GM12878 (cell line): ENCODE measurements at regions of chr2 and their contacts with region 1.

Region 1: DNA sequence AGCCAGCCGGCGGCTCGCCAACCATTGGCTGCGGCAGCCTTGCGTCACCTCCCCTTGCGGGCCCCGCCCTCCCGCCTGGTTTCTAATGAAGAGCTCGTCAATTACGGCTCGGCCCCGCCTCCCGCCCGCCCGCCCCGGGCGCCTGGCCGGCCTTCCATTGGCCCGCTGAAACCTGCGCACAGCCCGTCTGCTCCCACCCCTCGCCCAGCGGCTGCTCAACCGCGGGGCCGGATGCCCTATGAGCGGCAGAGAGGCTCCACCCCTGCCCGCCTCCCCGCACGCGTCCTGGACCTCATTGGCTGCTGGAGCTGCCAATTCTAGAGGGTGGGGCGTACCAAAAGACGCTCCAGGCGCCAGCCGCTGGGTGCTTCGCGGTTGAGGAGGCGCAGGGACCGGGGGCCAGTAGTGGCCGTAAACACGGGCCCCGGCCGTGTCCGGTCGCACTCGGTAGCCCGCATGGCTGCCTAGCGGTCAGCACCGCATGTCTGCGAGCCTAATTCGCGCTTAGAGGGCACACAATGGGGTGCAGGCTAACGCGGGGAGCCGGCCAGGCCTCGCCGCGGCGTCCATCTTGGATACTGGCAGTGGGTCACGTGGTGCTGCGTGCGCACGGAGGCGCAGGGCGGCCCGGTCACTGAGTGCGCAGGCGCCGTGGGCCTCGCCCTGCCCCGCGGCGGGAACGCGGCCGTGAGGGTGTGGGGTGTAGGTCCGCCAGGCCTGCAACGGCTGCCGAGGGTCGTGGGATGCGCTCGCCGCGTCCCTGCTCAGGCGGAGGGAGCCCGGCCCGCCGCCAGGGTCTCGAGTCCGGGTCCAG is 454 bp upstream of the HDAC4 start:
- DNase-seq: peak; percentile 93
- ATAC-seq: peak; percentile 97
- H3K4me3 ChIP-seq: peak overlapping the region; percentile 79
- H3K27ac ChIP-seq: peak overlapping the region; percentile 96
- H3K4me1 ChIP-seq: peaks cover 5% of the 10 kb centered on the region; the same call in 1 of the 2 replicates
- H3K27me3 ChIP-seq: no peaks in the 10 kb centered on the region
- CTCF ChIP-seq: no peak
- EP300 ChIP-seq: 0 out of 4 replicates have a peak, but pooled peaks of 1 of the 2 experiments have one; percentile 32
- POLR2A ChIP-seq: peak; percentile 100
- RAD21 ChIP-seq: no peak

Region 2: GRCh38 chr2:239035361-239036078 is 365.8 kb before region 1 on chr2:
- CTCF ChIA-PET with region 1: no interaction called
- POLR2A ChIA-PET with region 1: no interaction called
- RAD21 ChIA-PET with region 1: no interaction called
- SMC1A ChIA-PET with region 1: no interaction called
- in situ Hi-C with region 1: no loop called
- intact Hi-C with region 1: loop called (anchors 5 kb)
- DNase-seq: no peak
- ATAC-seq: peak; percentile 98
- H3K4me3 ChIP-seq: no peak overlapping the region
- H3K27ac ChIP-seq: no peak overlapping the region
- H3K4me1 ChIP-seq: no peaks in the 10 kb centered on the region
- H3K27me3 ChIP-seq: no peaks in the 10 kb centered on the region; a peak in 1 of 4 replicates
- CTCF ChIP-seq: peak; percentile 58 to 91 (median 76)
- EP300 ChIP-seq: no peak
- POLR2A ChIP-seq: no peak
- RAD21 ChIP-seq: peak; percentile 77

Region 3: GRCh38 chr2:239143858-239144718 is 257.2 kb before region 1 on chr2:
- CTCF ChIA-PET with region 1: interaction called, 3 read pairs
- POLR2A ChIA-PET with region 1: no interaction called
- RAD21 ChIA-PET with region 1: interaction called, 3 read pairs
- SMC1A ChIA-PET with region 1: no interaction called
- in situ Hi-C with region 1: no loop called
- intact Hi-C with region 1: loop called (anchors 5 kb)
- DNase-seq: no peak
- ATAC-seq: peak; percentile 68
- H3K4me3 ChIP-seq: no peak overlapping the region
- H3K27ac ChIP-seq: no peak overlapping the region
- H3K4me1 ChIP-seq: peaks cover 10% of the 10 kb centered on the region
- H3K27me3 ChIP-seq: no peaks in the 10 kb centered on the region
- CTCF ChIP-seq: peak; percentile 45 to 77 (median 64); a peak in 5 of 6 replicates
- EP300 ChIP-seq: no peak
- POLR2A ChIP-seq: no peak
- RAD21 ChIP-seq: peak; percentile 44; the same call in 1 of the 2 replicates

Region 4: DNA sequence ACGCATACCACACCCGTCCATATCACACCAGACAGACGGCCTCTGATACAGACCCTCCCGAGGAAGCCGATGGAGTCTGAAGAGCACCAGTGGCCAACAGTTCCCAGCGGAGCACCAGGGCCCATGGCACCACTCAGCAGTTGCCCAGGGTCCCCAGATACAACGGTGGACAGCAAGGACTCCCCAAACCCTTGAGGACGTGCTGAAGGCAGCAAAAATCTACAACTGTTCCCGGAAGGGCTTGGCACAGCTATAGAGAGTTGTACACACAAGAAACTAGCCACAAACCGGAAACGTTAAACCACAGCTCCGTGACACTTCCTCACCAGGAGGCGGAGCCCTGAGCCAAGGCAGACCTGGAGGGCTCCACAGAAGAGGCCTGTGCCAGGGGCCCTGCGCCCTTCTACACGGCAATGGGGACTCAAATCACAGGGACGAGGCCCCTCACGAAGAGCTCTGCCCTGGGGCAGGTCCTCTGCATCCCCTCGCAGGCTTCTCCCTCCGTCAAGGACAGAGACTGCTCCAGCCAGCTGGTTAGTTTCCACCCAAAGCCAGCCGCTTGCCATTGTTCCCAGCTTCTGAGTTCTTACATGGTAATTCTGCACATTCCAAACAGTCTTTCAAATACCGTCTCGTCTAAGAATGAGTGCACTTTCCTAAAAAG is 133.9 kb before region 1 on chr2:
- CTCF ChIA-PET with region 1: interaction called, 7 read pairs
- POLR2A ChIA-PET with region 1: no interaction called
- RAD21 ChIA-PET with region 1: interaction called, 6 read pairs
- SMC1A ChIA-PET with region 1: interaction called, 16 read pairs
- in situ Hi-C with region 1: no loop called
- intact Hi-C with region 1: loop called (anchors 5 kb)
- DNase-seq: peak; percentile 65
- ATAC-seq: peak; percentile 95
- H3K4me3 ChIP-seq: peak overlapping the region; percentile 45; the same call in 1 of the 2 replicates
- H3K27ac ChIP-seq: no peak overlapping the region
- H3K4me1 ChIP-seq: peaks cover 44% of the 10 kb centered on the region
- H3K27me3 ChIP-seq: no peaks in the 10 kb centered on the region
- CTCF ChIP-seq: peak; percentile 42 to 71 (median 57); a peak in 5 of 6 replicates
- EP300 ChIP-seq: no peak
- POLR2A ChIP-seq: peak; percentile 59; the same call in 1 of the 2 replicates
- RAD21 ChIP-seq: peak; percentile 81

Region 5: GRCh38 chr2:239348563-239349447 is 52.5 kb before region 1 on chr2:
- CTCF ChIA-PET with region 1: no interaction called
- POLR2A ChIA-PET with region 1: no interaction called
- RAD21 ChIA-PET with region 1: no interaction called
- SMC1A ChIA-PET with region 1: no interaction called
- in situ Hi-C with region 1: no loop called
- intact Hi-C with region 1: no loop called
- DNase-seq: no peak
- ATAC-seq: no peak
- H3K4me3 ChIP-seq: no peak overlapping the region
- H3K27ac ChIP-seq: no peak overlapping the region
- H3K4me1 ChIP-seq: no peaks in the 10 kb centered on the region
- H3K27me3 ChIP-seq: no peaks in the 10 kb centered on the region
- CTCF ChIP-seq: no peak
- EP300 ChIP-seq: no peak
- POLR2A ChIP-seq: no peak
- RAD21 ChIP-seq: no peak

Region 6: DNA sequence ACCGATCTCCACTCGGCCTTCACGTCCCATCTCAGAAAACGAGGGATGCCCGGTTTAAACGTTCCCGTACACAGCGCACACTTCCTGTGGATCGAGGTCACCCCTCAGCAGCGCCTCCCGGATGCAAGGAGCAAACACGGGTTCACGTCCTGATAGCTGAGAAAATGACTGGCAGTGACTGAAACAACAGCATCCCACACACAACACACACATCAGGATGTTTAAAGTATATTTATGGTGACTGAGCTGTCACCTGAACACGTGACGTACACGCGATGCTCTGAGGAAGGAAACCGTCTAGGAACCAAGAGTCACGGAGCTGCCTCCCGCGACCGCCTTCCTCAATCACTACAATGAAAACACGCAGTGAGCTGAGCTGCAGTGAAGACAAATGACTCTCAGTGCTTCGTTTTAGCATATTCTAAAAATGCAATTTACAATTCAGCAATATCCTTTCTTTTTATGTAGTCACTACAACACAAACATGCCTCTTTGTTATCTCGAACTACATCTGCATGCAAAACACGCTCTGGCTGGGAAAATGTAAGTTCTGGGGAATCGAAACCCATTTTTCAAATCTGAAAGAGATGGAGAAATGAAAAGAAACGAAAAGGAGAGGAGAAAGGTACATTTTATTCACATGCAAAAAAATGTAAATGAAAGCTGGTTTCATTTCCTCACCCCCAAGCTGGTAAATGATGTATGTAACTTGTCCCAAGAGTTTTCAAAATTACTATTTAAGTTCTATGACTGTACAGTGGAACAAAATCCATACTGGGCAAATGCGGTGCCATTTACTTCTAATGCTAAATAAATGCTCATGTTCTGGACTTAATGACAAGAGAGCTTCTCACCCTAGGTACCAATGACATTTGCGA is 20.2 kb before region 1 on chr2:
- CTCF ChIA-PET with region 1: no interaction called
- POLR2A ChIA-PET with region 1: interaction called, 19 read pairs
- RAD21 ChIA-PET with region 1: interaction called, 25 read pairs
- SMC1A ChIA-PET with region 1: interaction called, 6 read pairs
- in situ Hi-C with region 1: no loop called
- intact Hi-C with region 1: loop called (anchors 1 kb)
- DNase-seq: peak; percentile 35
- ATAC-seq: peak; percentile 65
- H3K4me3 ChIP-seq: peak overlapping the region; percentile 49; the same call in 1 of the 2 replicates
- H3K27ac ChIP-seq: 0 out of 2 replicates have a peak overlapping the region, but pooled peaks have one; percentile 13
- H3K4me1 ChIP-seq: peaks cover 12% of the 10 kb centered on the region
- H3K27me3 ChIP-seq: no peaks in the 10 kb centered on the region
- CTCF ChIP-seq: no peak
- EP300 ChIP-seq: peak in 1 of 2 experiments; percentile 24; a peak in 1 of 4 replicates
- POLR2A ChIP-seq: no peak
- RAD21 ChIP-seq: no peak